ENCODE measurements at regions of chr2 and their contacts with region 1.

Region 1: GRCh38 chr2:25794544-25795276 is 83.6 kb downstream of the ASXL2 start:
- DNase-seq: peak; percentile 22
- ATAC-seq: peak; percentile 60
- H3K4me3 Mint-ChIP-seq: peak overlapping the region; percentile 60
- H3K27ac Mint-ChIP-seq: peak overlapping the region; percentile 84
- H3K4me1 Mint-ChIP-seq: peaks cover 83% of the 10 kb centered on the region
- H3K27me3 Mint-ChIP-seq: no peaks in the 10 kb centered on the region

Region 2: DNA sequence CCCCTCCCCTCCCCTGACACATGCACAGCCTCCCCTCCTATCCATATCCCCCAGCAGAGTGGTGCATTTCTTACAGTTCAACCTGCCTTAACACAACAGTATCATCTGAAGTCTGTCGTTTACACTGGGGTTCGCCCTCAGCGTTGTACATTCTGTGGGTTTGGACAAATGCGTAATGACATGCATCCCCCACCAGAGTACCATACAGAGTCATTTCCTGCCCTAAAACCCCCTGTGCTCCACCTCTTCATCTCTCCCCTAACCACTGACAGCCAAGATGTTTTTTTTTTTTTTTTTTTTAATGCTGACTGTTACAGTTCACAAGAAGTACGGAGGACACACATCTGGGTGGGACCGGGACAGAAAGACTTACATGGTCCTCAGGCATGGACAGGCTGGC is 648.9 kb before region 1 on chr2:
- CTCF ChIA-PET with region 1: no interaction called
- POLR2A ChIA-PET with region 1: no interaction called
- intact Hi-C with region 1: no loop called
- DNase-seq: no peak
- ATAC-seq: peak; percentile 66
- H3K4me3 Mint-ChIP-seq: no peak overlapping the region
- H3K27ac Mint-ChIP-seq: no peak overlapping the region
- H3K4me1 Mint-ChIP-seq: peaks cover 2% of the 10 kb centered on the region
- H3K27me3 Mint-ChIP-seq: no peaks in the 10 kb centered on the region

Region 3: GRCh38 chr2:25749676-25750075 is 45.0 kb before region 1 on chr2:
- CTCF ChIA-PET with region 1: no interaction called
- POLR2A ChIA-PET with region 1: interaction called, 4 read pairs
- intact Hi-C with region 1: loop called in 1 of 2 experiments (anchors 5 kb)
- DNase-seq: no peak
- ATAC-seq: no peak
- H3K4me3 Mint-ChIP-seq: no peak overlapping the region
- H3K27ac Mint-ChIP-seq: peak overlapping the region; percentile 12
- H3K4me1 Mint-ChIP-seq: peaks cover 22% of the 10 kb centered on the region
- H3K27me3 Mint-ChIP-seq: no peaks in the 10 kb centered on the region

Region 4: DNA sequence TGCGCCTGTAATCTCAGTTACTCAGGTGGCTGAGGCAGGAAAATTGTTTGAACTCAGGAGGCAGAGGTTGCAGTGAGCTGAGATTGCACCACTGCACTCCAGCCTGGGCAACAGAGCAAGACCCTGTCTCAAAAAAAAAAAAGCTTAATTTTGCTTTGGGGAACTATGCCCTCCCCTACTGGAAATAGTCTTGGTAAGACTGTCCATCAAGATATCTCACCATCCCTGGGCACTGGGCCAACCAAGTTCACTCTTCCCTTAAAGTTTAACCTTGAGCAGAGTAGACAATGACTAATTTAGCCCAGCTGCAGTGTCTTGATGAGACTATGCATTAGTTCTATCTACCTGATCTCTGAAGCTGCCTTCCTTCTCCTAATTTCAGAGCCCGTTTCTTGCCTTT is 38.9 kb after region 1 on chr2:
- CTCF ChIA-PET with region 1: interaction called, 4 read pairs
- POLR2A ChIA-PET with region 1: no interaction called
- intact Hi-C with region 1: loop called in 1 of 2 experiments (anchors 1 kb)
- DNase-seq: peak; percentile 40
- ATAC-seq: no peak
- H3K4me3 Mint-ChIP-seq: no peak overlapping the region
- H3K27ac Mint-ChIP-seq: peak overlapping the region; percentile 26
- H3K4me1 Mint-ChIP-seq: peaks cover 57% of the 10 kb centered on the region
- H3K27me3 Mint-ChIP-seq: no peaks in the 10 kb centered on the region

Region 5: DNA sequence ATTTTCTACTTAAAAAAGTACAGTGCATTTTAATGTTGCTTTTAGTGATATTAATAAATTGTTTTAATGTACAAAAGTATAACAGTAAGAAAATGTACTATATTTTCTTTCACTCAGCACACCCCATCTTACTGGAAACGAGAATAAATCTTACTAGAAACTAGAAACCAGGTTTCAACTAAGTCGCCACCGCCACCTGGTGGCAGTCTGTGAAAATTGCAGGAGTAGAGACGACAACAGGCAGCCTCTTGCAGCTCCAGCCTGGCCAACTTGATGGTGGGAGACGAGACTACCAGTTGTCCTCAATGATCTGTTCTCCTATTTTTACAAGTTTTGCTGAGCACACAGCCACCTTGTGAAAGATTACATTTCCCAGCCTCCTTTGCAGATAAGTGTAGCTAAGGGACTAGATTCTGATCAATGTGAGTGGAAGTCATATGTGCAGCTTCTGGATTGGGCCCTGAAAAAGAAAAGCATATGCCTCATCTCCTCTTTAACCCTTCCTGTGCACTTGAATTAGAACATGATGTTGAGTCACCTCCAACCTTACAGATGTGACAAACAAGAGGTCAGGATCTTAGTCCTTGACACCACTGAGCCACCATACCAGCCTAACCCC is 674.5 kb after region 1 on chr2:
- CTCF ChIA-PET with region 1: no interaction called
- POLR2A ChIA-PET with region 1: no interaction called
- intact Hi-C with region 1: no loop called
- DNase-seq: peak; percentile 88
- ATAC-seq: peak; percentile 80
- H3K4me3 Mint-ChIP-seq: no peak overlapping the region
- H3K27ac Mint-ChIP-seq: no peak overlapping the region
- H3K4me1 Mint-ChIP-seq: no peaks in the 10 kb centered on the region
- H3K27me3 Mint-ChIP-seq: no peaks in the 10 kb centered on the region